ENCODE measurements at regions of chr1 and their contacts with region 1.

Region 1: DNA sequence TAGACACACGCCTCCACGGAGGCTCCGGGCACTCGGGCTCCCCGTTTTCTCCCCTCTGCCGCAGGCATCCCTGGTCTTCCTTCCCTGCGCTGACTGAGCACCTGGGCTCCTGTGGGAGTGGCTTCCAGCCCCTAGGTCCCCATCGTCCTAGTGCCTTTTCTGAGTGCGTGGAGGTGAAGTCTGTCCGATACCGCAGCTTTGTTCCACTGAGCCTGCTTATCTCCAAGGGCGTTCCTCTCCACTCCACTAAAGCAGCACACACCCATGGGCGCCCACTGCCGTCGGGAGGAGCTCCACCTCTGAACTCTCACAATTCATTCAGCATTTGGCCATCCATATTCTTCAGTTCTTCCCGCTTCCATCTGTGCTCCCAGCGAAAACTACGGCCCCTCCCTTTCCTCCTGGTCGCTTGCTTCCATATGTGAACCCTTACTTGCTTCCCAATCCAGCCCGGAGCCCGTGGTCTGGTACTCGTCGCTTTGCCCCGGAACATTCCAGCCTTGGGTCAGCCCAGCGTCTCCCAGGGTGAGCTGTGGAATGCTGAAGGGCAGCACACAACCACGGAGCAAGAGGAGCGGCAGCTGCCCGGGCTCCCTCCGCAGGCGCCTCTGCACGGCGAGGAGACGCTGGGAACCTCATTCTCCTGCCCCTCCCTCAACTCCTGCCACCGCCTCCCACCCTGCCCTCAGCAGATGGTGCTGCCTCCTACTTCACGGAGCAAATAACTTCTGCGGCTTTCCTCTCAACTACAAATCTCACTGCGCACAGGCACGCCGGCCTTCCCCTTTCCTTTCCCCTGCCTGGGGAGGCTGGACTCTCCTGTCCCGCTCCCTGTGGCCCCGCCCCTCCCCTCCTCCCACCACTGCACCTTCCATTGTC is 27.5 kb downstream of the ATP8B2 start:
- DNase-seq: peak; percentile 73 to 81
- H3K4me3 ChIP-seq: peak overlapping the region; percentile 43
- H3K4me3 Mint-ChIP-seq: peak overlapping the region; percentile 86
- H3K27ac Mint-ChIP-seq: peak overlapping the region; percentile 86
- H3K4me1 ChIP-seq: peaks cover 25% of the 10 kb centered on the region
- H3K4me1 Mint-ChIP-seq: peaks cover 20% of the 10 kb centered on the region
- H3K27me3 ChIP-seq: no peaks in the 10 kb centered on the region
- H3K27me3 Mint-ChIP-seq: no peaks in the 10 kb centered on the region
- CTCF ChIP-seq: no peak

Region 2: DNA sequence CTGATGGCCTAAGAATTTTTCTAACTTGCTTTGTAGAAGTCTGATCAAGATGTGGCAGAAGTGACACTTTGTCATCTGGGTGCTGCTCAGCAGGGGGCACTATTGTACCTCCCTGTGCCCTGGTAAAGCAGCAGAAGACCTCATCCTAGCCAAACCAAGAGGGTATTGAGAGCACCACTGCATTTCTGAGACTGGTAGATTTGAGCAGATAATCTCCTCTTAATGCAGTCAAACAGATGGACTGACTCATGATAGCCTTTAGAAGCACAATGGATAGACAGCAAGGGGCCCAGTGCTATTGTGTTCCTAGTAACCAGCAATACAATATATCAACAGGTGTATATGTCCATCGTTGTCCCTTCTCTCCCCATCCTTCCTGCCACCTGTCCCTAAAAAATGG is 166.6 kb before region 1 on chr1:
- CTCF ChIA-PET with region 1: no interaction called
- POLR2A ChIA-PET with region 1: no interaction called
- intact Hi-C with region 1: no loop called
- DNase-seq: peak; percentile 73 to 78
- H3K4me3 ChIP-seq: no peak overlapping the region
- H3K4me3 Mint-ChIP-seq: peak overlapping the region; percentile 56
- H3K27ac Mint-ChIP-seq: peak overlapping the region; percentile 81
- H3K4me1 ChIP-seq: peaks cover 34% of the 10 kb centered on the region
- H3K4me1 Mint-ChIP-seq: peaks cover 33% of the 10 kb centered on the region
- H3K27me3 ChIP-seq: no peaks in the 10 kb centered on the region; the same call in 1 of the 2 replicates
- H3K27me3 Mint-ChIP-seq: no peaks in the 10 kb centered on the region
- CTCF ChIP-seq: peak; percentile 71 to 81

Region 3: DNA sequence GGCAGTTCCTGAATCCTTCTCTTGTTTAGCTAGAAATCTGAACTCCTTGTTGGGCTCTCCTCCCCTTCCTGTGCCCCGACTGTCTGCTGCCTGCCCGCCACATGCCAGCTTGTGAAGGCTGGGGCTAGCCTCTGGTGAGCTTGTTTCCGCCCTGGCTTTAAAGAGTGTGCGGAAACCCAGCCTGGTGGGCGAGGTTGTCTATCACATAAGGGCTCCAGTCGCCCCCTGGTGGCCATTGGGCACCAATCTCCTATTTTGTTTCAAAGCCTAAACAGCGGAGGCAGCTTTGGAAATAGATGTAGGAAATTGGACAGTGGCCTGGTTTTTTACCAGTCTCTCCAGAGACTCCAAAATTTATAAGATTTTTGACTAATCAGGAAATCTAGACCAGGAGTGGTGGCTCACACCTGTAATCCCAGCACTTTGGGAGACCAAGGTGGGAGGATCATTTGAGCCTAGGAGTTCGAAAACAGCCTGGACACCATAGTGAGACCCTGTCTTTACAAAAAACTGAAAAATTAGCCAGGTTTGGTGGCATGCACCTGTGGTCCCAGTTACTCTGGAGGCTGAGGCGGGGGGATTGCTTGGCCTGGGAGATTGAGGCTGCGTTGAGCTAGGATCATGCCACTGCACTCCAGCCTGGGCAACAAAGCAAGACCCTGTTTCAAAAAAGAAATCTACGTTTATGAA is 17.6 kb before region 1 on chr1:
- CTCF ChIA-PET with region 1: interaction called, 16 read pairs
- POLR2A ChIA-PET with region 1: interaction called, 11 read pairs
- intact Hi-C with region 1: loop called (anchors 2 kb)
- DNase-seq: peak; percentile 86 to 88
- H3K4me3 ChIP-seq: no peak overlapping the region
- H3K4me3 Mint-ChIP-seq: peak overlapping the region; percentile 61
- H3K27ac Mint-ChIP-seq: peak overlapping the region; percentile 61
- H3K4me1 ChIP-seq: peaks cover 7% of the 10 kb centered on the region
- H3K4me1 Mint-ChIP-seq: peaks cover 32% of the 10 kb centered on the region
- H3K27me3 ChIP-seq: no peaks in the 10 kb centered on the region
- H3K27me3 Mint-ChIP-seq: no peaks in the 10 kb centered on the region
- CTCF ChIP-seq: peak; percentile 88 to 89

Region 4: DNA sequence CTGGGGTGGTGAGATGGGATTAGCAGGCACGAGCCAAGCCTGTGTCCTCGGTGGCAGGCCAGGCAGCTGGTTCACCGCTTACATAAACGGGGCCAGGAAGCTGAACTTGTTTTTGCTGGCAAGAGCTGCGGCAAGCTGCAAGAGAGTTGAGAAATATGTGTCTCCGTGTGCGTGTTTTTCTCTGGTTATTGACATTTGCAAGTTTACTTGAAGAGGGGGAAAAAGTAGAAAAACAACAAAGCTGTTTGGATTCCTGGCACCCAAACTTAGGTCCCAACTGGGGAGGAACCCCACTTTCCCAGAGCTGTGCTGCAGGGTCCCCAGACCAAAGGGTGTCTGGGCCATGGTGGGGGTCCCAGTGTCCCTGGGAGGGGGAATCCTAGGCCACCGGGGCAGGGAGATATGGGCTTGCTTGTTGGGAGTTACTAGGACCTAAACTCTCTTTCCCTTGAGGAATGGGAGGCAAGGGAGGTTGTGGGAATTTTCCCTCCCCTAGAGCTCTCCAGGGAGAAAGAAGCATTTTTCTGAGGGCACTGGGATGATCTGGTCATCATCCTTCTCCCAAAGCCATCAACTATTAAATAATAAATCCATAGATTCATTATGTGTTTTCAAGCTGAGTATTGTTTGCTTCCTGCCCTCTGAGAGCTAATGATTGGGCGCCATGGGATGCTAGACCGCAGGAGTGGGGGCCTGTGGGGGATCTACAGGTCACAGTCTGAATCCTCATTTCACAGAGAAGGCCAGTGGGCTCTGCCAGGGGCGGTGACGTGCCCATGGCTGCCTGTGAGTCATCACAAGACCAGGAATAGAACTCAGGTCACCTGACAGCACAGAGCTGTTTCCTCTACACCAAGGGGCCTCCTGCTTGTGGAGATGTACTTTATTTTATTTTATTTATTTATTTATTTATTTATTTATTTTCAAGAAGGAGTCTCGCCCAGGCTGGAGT is 67.1 kb after region 1 on chr1:
- CTCF ChIA-PET with region 1: interaction called, 11 read pairs
- POLR2A ChIA-PET with region 1: no interaction called
- intact Hi-C with region 1: no loop called
- DNase-seq: no peak
- H3K4me3 ChIP-seq: no peak overlapping the region
- H3K4me3 Mint-ChIP-seq: no peak overlapping the region
- H3K27ac Mint-ChIP-seq: peak overlapping the region; percentile 66
- H3K4me1 ChIP-seq: peaks cover 19% of the 10 kb centered on the region
- H3K4me1 Mint-ChIP-seq: peaks cover 9% of the 10 kb centered on the region
- H3K27me3 ChIP-seq: no peaks in the 10 kb centered on the region
- H3K27me3 Mint-ChIP-seq: no peaks in the 10 kb centered on the region
- CTCF ChIP-seq: no peak

Region 5: GRCh38 chr1:154546264-154547063 is 193.6 kb after region 1 on chr1:
- CTCF ChIA-PET with region 1: interaction called, 4 read pairs
- POLR2A ChIA-PET with region 1: no interaction called
- intact Hi-C with region 1: loop called (anchors 5 kb)
- DNase-seq: peak; percentile 73 to 80
- H3K4me3 ChIP-seq: no peak overlapping the region
- H3K4me3 Mint-ChIP-seq: no peak overlapping the region
- H3K27ac Mint-ChIP-seq: no peak overlapping the region
- H3K4me1 ChIP-seq: no peaks in the 10 kb centered on the region
- H3K4me1 Mint-ChIP-seq: peaks cover 9% of the 10 kb centered on the region
- H3K27me3 ChIP-seq: no peaks in the 10 kb centered on the region
- H3K27me3 Mint-ChIP-seq: peaks cover 7% of the 10 kb centered on the region
- CTCF ChIP-seq: peak; percentile 70 to 83